ENCODE measurements at regions of chr12 and their contacts with region 1.

Region 1: GRCh38 chr12:70733385-70733784 is 96.2 kb upstream of the PTPRB start:
- H3K4me3 ChIP-seq: no peak overlapping the region
- H3K27ac ChIP-seq: no peak overlapping the region
- H3K4me1 ChIP-seq: no peaks in the 10 kb centered on the region
- CTCF ChIP-seq: no peak

Region 2: DNA sequence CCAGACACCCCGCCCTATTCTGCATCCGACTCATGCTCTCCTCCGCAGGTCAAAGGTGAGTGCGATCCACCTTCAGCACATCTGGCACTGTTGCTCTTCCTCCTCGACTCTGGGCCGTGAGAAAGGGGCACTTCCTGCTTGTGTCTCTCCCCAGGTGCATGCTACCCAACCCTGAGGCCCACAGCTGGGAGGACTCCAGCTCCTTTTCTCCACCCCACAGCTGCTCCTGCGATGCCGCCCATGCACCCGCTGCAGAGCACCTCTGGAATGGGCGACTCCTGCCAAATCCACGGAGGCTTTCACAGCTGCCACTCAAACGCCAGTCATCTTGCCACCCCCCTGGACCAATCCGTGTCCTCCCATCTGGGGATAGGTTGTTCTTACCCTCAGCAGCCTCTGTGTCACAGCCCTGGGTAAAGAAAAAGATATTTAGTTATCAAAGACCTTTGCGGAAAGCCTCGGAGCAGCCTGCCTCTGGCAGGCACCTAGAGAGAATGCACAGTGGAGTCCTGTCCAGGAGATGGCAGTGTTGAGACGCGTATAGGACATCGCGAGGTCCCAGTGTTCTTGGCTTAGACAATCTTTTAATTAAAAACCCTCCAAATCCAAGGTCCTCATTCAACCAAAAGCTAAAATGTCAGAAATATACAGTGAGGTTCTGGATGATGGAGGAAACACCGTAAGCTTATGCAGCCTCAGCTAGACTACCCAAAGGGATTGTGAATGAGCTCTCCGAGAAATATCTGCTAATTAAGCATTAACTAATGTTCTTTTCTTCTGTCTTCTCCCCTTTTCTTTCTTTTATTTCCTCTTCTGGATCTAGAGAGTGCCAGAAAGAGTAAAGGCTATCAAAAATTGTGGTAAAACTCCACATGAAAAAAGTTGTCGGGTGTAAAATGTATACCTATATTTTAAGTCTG is 854.1 kb before region 1 on chr12:
- CTCF ChIA-PET with region 1: interaction called, 10 read pairs
- POLR2A ChIA-PET with region 1: no interaction called
- H3K4me3 ChIP-seq: no peak overlapping the region
- H3K27ac ChIP-seq: no peak overlapping the region
- H3K4me1 ChIP-seq: no peaks in the 10 kb centered on the region
- CTCF ChIP-seq: peak; percentile 64; the same call in 1 of the 2 replicates

Region 3: GRCh38 chr12:70590051-70590450 is 143.3 kb before region 1 on chr12:
- CTCF ChIA-PET with region 1: interaction called, 10 read pairs
- POLR2A ChIA-PET with region 1: no interaction called
- H3K4me3 ChIP-seq: no peak overlapping the region
- H3K27ac ChIP-seq: no peak overlapping the region
- H3K4me1 ChIP-seq: no peaks in the 10 kb centered on the region
- CTCF ChIP-seq: peak; percentile 47

Region 4: GRCh38 chr12:70719672-70720420 is 13.5 kb before region 1 on chr12:
- CTCF ChIA-PET with region 1: no interaction called
- POLR2A ChIA-PET with region 1: no interaction called
- H3K4me3 ChIP-seq: no peak overlapping the region
- H3K27ac ChIP-seq: no peak overlapping the region
- H3K4me1 ChIP-seq: no peaks in the 10 kb centered on the region
- CTCF ChIP-seq: peak; percentile 45; the same call in 1 of the 2 replicates

Region 5: GRCh38 chr12:70849265-70849960 is 116.0 kb after region 1 on chr12:
- CTCF ChIA-PET with region 1: interaction called, 12 read pairs
- POLR2A ChIA-PET with region 1: no interaction called
- H3K4me3 ChIP-seq: no peak overlapping the region
- H3K27ac ChIP-seq: no peak overlapping the region
- H3K4me1 ChIP-seq: no peaks in the 10 kb centered on the region
- CTCF ChIP-seq: no peak

Region 6: DNA sequence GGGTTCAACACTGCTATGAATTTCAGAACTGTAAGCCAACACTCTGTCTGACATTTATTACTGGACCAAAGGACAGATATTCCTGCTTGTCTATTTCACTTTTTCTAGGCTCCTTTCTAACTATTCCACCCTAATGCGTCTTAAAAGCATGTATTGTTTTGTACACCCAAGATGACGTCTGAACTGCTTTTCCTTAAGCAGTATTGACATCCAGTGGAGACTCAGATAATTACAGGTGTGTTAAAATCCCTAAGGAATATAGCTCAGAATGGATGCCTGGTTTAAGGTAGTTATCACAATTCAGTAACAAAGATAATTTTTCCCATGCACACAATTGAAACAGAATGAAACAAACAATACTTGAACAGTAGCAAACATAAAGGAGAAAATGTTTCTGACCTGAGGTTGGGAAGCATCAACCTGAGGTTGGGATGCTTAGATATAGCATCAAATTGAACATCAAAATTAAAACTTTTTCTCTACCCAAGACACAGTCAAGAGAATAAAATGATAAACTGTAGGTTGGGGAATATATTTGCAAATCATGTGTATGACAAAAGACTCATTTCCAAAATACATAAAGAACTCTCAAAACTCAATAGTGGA is 280.9 kb after region 1 on chr12:
- CTCF ChIA-PET with region 1: interaction called, 12 read pairs
- POLR2A ChIA-PET with region 1: no interaction called
- H3K4me3 ChIP-seq: no peak overlapping the region
- H3K27ac ChIP-seq: no peak overlapping the region
- H3K4me1 ChIP-seq: no peaks in the 10 kb centered on the region
- CTCF ChIP-seq: no peak